ENCODE measurements at regions of chr14 and their contacts with region 1.

Region 1: DNA sequence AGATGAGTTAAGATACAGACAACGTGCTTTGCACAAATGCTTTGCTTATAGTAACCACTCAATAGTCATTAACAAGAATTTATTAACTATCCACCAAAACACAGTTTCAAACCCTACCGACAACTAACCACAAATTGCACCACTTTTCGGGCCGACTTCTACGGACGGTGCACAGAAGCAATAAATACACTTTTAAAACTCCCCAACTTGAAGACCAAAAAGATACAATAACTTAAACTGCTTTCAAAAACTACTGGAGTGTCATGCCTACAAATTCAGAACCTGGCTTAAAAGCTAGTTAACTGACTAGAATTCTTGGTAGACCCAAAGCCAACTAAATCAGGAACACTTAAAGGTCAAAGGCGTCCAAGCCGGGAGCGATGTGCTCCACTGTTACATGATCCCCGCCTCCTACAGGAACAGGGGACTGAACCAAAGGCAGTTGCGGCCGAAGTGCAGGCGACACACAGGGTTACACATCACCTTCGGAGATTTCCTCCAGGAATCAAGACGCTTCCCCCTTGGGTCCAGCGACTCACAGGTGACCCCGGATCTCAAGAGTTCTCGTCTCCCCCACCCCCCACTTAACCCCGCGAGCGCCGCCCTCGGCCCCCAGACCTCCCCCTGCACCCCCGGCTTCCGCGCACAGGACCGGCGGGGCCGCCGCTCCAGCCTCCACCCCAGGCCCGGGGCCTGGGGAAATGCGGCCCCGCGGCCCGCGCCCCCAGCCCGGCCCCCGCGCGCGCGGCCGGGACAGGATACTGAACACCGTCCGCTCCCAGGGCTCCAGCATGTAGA is 507 bp downstream of the SPTSSA start:
- DNase-seq: peak; percentile 50
- ATAC-seq: peak; percentile 62
- H3K4me3 Mint-ChIP-seq: peak overlapping the region; percentile 91
- H3K27ac Mint-ChIP-seq: peak overlapping the region; percentile 85
- H3K4me1 Mint-ChIP-seq: peaks cover 19% of the 10 kb centered on the region
- H3K27me3 Mint-ChIP-seq: no peaks in the 10 kb centered on the region

Region 2: DNA sequence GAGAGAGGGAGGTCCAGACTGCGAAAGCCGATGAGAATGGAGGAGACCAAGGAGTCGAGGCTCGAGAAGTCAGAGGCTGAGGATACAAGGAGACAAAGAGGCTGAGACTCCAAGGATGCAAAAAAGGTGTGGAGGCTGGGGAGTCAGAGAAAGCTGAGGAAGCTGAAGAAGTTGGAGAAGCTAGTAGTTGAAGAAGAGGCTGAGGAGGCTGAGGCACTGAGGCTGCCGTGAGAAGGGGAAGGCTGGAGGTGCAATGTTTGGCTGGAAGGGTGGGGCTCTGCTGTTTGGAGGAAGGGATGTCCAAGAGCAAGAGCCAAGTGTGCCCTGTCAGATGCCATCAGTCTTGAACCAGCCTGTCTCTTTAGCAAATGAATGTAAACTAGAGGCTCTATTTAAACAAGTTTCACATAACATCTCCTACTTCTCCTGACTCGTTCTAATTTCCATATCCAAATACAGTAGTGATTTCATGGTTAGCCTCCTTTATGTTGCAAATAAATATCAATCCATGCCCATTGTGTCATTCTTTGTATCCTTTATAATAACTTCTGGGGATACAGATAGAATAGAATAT is 11.3 kb after region 1 on chr14:
- CTCF ChIA-PET with region 1: no interaction called
- POLR2A ChIA-PET with region 1: no interaction called
- intact Hi-C with region 1: no loop called
- DNase-seq: no peak
- ATAC-seq: no peak
- H3K4me3 Mint-ChIP-seq: no peak overlapping the region
- H3K27ac Mint-ChIP-seq: no peak overlapping the region
- H3K4me1 Mint-ChIP-seq: no peaks in the 10 kb centered on the region
- H3K27me3 Mint-ChIP-seq: no peaks in the 10 kb centered on the region

Region 3: GRCh38 chr14:34539407-34540180 is 78.1 kb after region 1 on chr14 and contains the start of gene EAPP:
- CTCF ChIA-PET with region 1: interaction called, 3 read pairs
- POLR2A ChIA-PET with region 1: no interaction called
- intact Hi-C with region 1: loop called (anchors 1 to 5 kb)
- DNase-seq: peak; percentile 98
- ATAC-seq: peak; percentile 99
- H3K4me3 Mint-ChIP-seq: peak within 1 kb of the TSS; percentile 94
- H3K27ac Mint-ChIP-seq: peak within 1 kb of the TSS; percentile 95
- H3K4me1 Mint-ChIP-seq: peaks cover 33% of the 10 kb centered on the region
- H3K27me3 Mint-ChIP-seq: no peaks in the 10 kb centered on the region
- total RNA-seq, gene EAPP: 41.6 to 49.2 TPM

Region 4: DNA sequence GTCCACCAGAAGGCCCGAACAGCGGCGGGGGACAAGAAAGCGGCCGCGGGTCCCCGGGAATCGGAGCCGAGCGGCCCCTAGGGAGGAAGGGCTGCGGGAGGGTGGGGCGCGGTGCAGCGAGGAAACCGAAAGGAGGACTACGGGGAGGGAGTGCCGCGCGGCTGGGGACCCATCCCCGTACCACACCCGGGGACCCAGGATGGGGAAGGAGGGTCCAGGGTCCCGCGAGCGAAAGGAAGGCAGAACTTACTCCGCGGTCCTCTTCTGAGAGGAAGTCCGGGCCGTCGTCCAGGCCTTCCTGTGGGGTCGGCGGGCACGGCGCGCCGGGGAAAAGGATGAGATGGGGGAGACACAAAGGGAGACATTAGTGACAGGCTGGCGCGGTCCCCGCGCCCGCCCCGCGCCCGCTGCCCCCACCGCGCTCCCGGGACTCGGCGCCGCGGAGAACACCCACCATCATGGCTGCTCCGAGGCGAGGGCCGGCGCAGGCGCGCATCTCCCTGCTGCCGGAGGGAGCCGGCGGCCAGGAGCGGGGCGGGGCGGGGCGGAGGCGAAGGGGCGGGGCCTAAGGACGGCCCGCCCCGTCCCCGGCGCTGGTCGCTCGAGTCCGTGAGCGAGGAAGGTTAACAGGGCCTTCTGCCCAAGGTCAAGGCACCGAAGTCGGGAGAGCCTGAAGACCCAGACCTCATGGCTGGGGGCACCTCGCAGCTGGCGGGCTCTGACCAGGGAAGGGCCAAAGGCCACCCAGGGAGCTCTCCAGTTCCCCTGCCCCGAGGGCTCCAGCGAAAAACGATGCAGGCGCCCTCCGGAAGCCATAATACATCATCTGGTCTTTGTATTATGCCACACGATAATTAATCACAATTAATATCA is 168.4 kb after region 1 on chr14 and contains the start of gene SNX6:
- CTCF ChIA-PET with region 1: no interaction called
- POLR2A ChIA-PET with region 1: interaction called, 3 read pairs
- intact Hi-C with region 1: loop called in 1 of 2 experiments (anchors 1 kb)
- DNase-seq: peak; percentile 93
- ATAC-seq: peak; percentile 98
- H3K4me3 Mint-ChIP-seq: peak within 1 kb of the TSS; percentile 97
- H3K27ac Mint-ChIP-seq: peak within 1 kb of the TSS; percentile 98
- H3K4me1 Mint-ChIP-seq: peaks cover 25% of the 10 kb centered on the region
- H3K27me3 Mint-ChIP-seq: no peaks in the 10 kb centered on the region
- total RNA-seq, gene SNX6: 77.3 to 78.7 TPM

Region 5: DNA sequence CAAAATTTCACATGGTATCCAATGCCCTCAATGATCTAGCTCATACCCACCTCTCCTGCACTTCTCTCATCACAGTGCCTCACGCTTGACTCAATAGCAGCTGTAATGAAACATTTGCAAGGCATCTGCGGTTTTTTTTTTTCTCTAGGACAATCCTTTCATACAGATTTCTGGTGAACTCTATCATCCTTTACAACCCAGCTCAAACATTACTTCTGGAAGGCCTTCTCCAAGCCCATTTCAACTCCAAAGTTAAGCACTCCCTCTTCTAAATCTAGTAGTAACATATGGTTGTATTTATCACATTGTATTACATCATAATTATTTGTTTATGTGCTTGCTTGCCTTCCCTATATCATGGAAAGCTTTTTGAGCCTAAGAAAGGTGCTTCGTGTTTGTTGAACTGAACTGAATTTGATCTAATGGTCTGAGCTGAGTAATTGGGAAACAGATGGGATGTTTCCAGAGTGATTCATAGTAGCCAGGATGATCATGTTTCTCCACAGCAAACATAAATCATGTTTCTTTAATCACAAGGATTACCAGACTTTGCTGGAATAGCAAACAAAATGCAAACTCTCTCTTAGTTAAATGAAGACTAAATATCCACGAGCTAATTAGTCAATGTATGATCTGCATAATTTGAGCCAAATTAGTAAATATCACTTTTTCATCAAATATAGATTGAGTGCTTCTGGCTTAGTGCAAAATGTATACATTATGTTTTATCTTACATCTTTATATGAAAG is 238.5 kb after region 1 on chr14:
- CTCF ChIA-PET with region 1: no interaction called
- POLR2A ChIA-PET with region 1: no interaction called
- intact Hi-C with region 1: no loop called
- DNase-seq: no peak
- ATAC-seq: no peak
- H3K4me3 Mint-ChIP-seq: no peak overlapping the region
- H3K27ac Mint-ChIP-seq: no peak overlapping the region
- H3K4me1 Mint-ChIP-seq: no peaks in the 10 kb centered on the region
- H3K27me3 Mint-ChIP-seq: no peaks in the 10 kb centered on the region